ENCODE measurements at regions of chr1 and their contacts with region 1.

Region 1: GRCh38 chr1:155208541-155209311 is at the start of gene MTX1:
- DNase-seq: peak; percentile 77 to 94 (median 88)
- ATAC-seq: peak; percentile 84
- H3K4me3 ChIP-seq: peak within 1 kb of the TSS; percentile 79 to 86
- H3K4me3 Mint-ChIP-seq: peak within 1 kb of the TSS; percentile 86
- H3K27ac ChIP-seq: peak within 1 kb of the TSS; percentile 99
- H3K27ac Mint-ChIP-seq: peak within 1 kb of the TSS; percentile 95
- H3K4me1 ChIP-seq: peaks cover 22% of the 10 kb centered on the region
- H3K4me1 Mint-ChIP-seq: peaks cover 20% of the 10 kb centered on the region
- H3K27me3 ChIP-seq: no peaks in the 10 kb centered on the region
- H3K27me3 Mint-ChIP-seq: no peaks in the 10 kb centered on the region
- CTCF ChIP-seq: no peak
- total RNA-seq, gene MTX1: 24.4 to 25.8 TPM

Region 2: DNA sequence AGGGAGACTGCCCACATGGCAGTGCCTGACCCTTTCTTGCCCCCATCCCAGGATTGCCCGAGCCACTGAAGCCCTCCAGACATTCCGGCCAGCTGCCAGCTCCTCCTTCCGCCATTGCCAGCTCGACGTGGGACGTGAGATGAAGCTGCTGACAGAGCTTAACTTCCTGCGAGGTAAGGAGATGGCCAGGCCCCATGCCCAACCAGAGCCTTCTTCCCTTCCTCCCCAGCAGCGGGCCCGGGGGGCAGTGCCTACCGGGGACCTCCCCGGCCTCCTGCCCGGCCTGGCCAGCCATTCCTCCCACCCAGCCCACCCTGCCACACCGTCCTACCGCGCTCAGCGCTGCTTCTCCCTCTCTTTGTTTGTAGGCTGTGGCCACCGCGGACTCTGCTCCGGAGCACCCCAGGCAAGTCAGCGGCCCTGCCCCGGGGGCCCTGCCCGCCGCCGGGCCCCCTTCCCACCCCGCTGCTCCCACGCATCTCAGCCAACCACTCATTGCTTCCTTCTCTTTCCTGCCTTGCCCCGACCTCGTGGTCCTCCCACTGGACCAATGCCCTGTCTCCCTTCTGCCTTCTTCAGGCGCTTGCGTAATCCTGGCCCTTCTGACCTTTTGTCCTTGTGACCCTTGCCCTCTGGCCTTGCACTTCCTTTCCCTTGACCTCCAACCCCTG is 30.1 kb before region 1 on chr1:
- CTCF ChIA-PET with region 1: interaction called, 32 read pairs
- POLR2A ChIA-PET with region 1: no interaction called
- intact Hi-C with region 1: loop called (anchors 1 kb)
- DNase-seq: peak in 2 of 9 experiments; percentile 12 to 14
- ATAC-seq: no peak
- H3K4me3 ChIP-seq: no peak overlapping the region
- H3K4me3 Mint-ChIP-seq: no peak overlapping the region
- H3K27ac ChIP-seq: no peak overlapping the region
- H3K27ac Mint-ChIP-seq: no peak overlapping the region
- H3K4me1 ChIP-seq: peaks cover 33% of the 10 kb centered on the region
- H3K4me1 Mint-ChIP-seq: peaks cover 21% of the 10 kb centered on the region
- H3K27me3 ChIP-seq: no peaks in the 10 kb centered on the region
- H3K27me3 Mint-ChIP-seq: no peaks in the 10 kb centered on the region
- CTCF ChIP-seq: no peak

Region 3: GRCh38 chr1:155218854-155219591 is 10.3 kb after region 1 on chr1:
- CTCF ChIA-PET with region 1: interaction called, 141 read pairs
- POLR2A ChIA-PET with region 1: no interaction called
- intact Hi-C with region 1: no loop called
- DNase-seq: peak in 1 of 9 experiments; percentile 59
- ATAC-seq: no peak
- H3K4me3 ChIP-seq: no peak overlapping the region
- H3K4me3 Mint-ChIP-seq: no peak overlapping the region
- H3K27ac ChIP-seq: peak overlapping the region in 1 of 2 experiments; percentile 57
- H3K27ac Mint-ChIP-seq: no peak overlapping the region
- H3K4me1 ChIP-seq: peaks cover 4% of the 10 kb centered on the region
- H3K4me1 Mint-ChIP-seq: peaks cover 10% of the 10 kb centered on the region
- H3K27me3 ChIP-seq: no peaks in the 10 kb centered on the region
- H3K27me3 Mint-ChIP-seq: no peaks in the 10 kb centered on the region
- CTCF ChIP-seq: no peak

Region 4: DNA sequence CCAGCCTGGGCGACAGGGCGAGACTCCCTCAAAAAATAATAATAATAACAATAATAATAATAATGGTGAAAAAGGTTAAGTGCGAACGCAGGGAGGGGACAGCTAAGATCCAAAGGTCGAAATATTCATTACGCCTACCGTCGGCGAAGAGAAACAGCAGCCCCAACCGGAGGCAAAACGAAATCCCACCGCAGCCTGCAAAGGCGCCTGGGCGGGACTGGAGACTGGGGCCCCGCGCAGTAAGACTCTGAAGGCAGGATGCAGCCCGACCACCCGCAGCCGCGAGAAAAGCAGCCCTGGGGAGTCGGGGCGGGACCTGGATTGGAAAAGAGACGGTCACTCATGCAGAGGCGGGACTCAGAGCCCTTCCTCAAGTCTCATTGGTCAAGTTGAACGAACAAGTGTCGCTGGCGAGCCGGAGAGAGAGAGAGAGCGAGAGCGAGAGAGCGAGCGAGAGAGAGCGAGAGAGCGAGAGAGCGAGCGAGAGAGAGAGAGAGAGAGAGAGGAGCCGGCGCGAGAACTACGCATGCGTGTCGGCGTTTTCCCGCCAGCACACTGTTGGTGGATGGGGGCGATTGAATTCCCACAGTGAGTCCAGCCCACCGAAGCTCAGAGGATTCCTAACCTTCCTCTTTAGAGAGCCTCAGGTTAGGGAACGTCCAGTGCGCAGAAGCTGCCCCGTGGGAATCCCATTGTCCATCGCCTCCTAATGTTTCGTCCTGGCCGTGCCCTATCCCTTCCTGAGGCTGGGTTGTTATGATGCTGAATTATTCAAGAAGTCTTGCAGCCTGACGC is 35.8 kb after region 1 on chr1:
- CTCF ChIA-PET with region 1: interaction called, 25 read pairs
- POLR2A ChIA-PET with region 1: interaction called, 11 read pairs
- intact Hi-C with region 1: loop called (anchors 1 to 2 kb)
- DNase-seq: peak; percentile 89 to 99 (median 96)
- ATAC-seq: peak; percentile 95
- H3K4me3 ChIP-seq: peak overlapping the region; percentile 59 to 73
- H3K4me3 Mint-ChIP-seq: peak overlapping the region; percentile 88
- H3K27ac ChIP-seq: peak overlapping the region; percentile 71 to 78
- H3K27ac Mint-ChIP-seq: peak overlapping the region; percentile 97
- H3K4me1 ChIP-seq: peaks cover 34% of the 10 kb centered on the region
- H3K4me1 Mint-ChIP-seq: peaks cover 43% of the 10 kb centered on the region
- H3K27me3 ChIP-seq: no peaks in the 10 kb centered on the region
- H3K27me3 Mint-ChIP-seq: peaks cover 2% of the 10 kb centered on the region
- CTCF ChIP-seq: peak; percentile 62

Region 5: DNA sequence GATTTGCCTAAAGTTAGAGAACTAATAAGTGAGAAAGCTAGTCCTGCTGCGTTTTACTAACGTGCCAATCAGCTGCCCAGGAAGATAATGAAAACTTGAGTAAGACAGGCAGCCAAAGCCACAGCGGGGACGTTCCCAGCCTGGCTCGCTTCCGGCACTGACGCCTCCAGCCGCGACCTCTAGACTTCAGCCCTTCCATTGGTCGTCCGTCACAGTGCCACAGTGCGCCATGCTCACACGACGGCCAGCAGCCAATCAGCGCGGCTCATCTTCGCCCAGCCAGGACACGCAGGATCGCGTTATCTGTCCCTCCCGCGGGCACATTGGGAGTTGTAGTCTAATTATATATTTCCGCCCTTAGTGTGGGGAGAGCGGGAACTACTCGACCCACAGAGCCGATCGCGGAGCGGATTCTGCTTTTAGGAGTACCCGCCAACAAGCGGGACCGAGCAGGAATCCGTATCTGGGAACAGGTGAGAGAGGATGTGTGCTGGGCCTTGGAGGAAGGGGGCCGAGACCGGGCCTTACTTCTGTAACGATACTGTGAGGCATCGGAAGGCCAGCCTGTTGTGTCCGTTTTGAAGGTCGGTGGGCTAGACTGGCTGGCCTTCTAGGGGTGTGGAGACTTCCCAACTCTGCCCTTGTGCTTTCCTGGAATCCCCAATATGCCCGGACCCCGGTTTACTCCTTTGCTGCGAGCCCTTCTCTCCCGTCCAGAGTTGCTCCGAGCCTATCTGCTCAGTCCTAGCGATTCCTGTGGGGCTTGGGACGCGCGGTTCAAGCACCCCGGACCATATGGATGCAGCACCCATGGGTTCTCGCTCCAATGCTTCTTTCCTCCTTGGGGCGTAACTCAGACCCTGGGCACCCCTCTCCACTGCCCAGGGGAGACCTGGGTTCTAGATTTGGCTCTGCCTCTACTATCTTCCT is 100.0 kb after region 1 on chr1 and contains the start of gene FDPS:
- CTCF ChIA-PET with region 1: interaction called, 6 read pairs
- POLR2A ChIA-PET with region 1: no interaction called
- intact Hi-C with region 1: loop called in 1 of 2 experiments (anchors 1 kb)
- DNase-seq: peak; percentile 92 to 100 (median 96)
- ATAC-seq: peak; percentile 97
- H3K4me3 ChIP-seq: peak within 1 kb of the TSS; percentile 73 to 97
- H3K4me3 Mint-ChIP-seq: peak within 1 kb of the TSS; percentile 94
- H3K27ac ChIP-seq: peak within 1 kb of the TSS; percentile 70 to 91
- H3K27ac Mint-ChIP-seq: peak within 1 kb of the TSS; percentile 93
- H3K4me1 ChIP-seq: peaks cover 18% of the 10 kb centered on the region
- H3K4me1 Mint-ChIP-seq: peaks cover 27% of the 10 kb centered on the region
- H3K27me3 ChIP-seq: no peaks in the 10 kb centered on the region
- H3K27me3 Mint-ChIP-seq: no peaks in the 10 kb centered on the region
- CTCF ChIP-seq: no peak
- total RNA-seq, gene FDPS: 38.2 to 38.7 TPM

Region 6: GRCh38 chr1:155562581-155563376 is 354.1 kb after region 1 on chr1 and contains the start of gene ASH1L:
- CTCF ChIA-PET with region 1: no interaction called
- POLR2A ChIA-PET with region 1: no interaction called
- intact Hi-C with region 1: loop called in 1 of 2 experiments (anchors 1 kb)
- DNase-seq: peak; percentile 89 to 98 (median 94)
- ATAC-seq: peak; percentile 73
- H3K4me3 ChIP-seq: peak within 1 kb of the TSS; percentile 91 to 100
- H3K4me3 Mint-ChIP-seq: peak within 1 kb of the TSS; percentile 99
- H3K27ac ChIP-seq: peak within 1 kb of the TSS; percentile 97 to 98
- H3K27ac Mint-ChIP-seq: peak within 1 kb of the TSS; percentile 98
- H3K4me1 ChIP-seq: peaks cover 38% of the 10 kb centered on the region
- H3K4me1 Mint-ChIP-seq: peaks cover 53% of the 10 kb centered on the region
- H3K27me3 ChIP-seq: no peaks in the 10 kb centered on the region
- H3K27me3 Mint-ChIP-seq: no peaks in the 10 kb centered on the region
- CTCF ChIP-seq: no peak
- total RNA-seq, gene ASH1L: 54.6 to 58.9 TPM